Left ventricle myocardium superior (tissue), 1 donor: ENCODE measurements at regions of chr5 and their contacts with region 1.

Region 1: GRCh38 chr5:124649491-124650146 is 96.8 kb downstream of the ZNF608 start:
- DNase-seq: peak; percentile 84
- ATAC-seq: peak; percentile 50

Region 2: DNA sequence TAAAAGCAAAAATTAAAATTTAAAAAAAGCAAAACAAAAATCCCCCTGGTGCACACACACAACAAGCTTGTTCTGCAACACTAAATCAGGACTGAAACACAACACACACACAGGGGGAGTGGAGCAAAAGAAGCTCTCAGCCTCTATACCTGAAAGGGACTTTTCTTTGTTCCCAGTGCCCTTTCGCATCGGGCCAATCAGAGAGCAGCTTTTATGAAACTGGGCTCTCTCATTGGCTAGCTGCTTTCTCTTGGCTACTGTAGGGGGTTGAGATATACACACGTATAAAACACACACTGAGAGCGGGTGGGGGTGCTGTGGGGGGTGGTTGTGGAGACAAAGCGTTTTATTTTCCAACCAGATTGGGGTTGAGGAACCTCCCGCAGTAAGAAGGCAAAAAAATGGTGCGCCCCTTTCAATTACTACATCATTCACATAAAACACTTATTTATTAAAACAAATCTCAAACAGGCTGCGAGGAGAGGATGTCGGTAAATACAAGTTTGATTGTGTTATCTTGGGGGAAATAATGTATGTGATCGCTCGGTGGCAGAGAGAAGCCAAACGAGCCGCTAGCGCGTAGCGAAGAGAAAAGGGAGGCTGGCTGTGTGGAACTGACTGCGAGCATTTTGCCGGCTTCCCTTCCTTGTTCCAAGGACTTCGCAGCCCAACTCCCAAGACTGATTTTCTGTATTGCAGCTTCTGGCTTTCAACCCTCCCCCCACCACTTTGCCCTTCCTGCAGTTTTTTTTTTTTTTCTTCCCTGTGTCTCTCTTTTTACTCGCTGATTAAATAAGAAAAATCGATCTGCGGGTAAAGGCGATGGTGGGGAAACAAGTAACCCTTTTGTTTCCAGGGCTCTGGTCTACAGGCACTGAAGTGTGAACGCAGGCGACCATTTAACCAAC is 99.3 kb after region 1 on chr5:
- intact Hi-C with region 1: loop called (anchors 5 kb)
- DNase-seq: peak; percentile 43
- ATAC-seq: peak; percentile 91